Activated CD8-positive, alpha-beta T cell treated with anti-CD3 and anti-CD28 coated beads, Interleukin-2, amount 10 ng/mL, durations not matched to agents 7 days and 5 days (primary cell): ENCODE measurements at regions of chr6 and their contacts with region 1.

Region 1: GRCh38 chr6:31441365-31442267 is 38.2 kb downstream of the MICA start:
- DNase-seq: peak; percentile 88
- ATAC-seq: peak; percentile 98
- H3K4me3 Mint-ChIP-seq: no peak overlapping the region
- H3K27ac Mint-ChIP-seq: no peak overlapping the region
- H3K4me1 Mint-ChIP-seq: peaks cover 6% of the 10 kb centered on the region
- H3K27me3 Mint-ChIP-seq: peaks cover 56% of the 10 kb centered on the region

Region 2: DNA sequence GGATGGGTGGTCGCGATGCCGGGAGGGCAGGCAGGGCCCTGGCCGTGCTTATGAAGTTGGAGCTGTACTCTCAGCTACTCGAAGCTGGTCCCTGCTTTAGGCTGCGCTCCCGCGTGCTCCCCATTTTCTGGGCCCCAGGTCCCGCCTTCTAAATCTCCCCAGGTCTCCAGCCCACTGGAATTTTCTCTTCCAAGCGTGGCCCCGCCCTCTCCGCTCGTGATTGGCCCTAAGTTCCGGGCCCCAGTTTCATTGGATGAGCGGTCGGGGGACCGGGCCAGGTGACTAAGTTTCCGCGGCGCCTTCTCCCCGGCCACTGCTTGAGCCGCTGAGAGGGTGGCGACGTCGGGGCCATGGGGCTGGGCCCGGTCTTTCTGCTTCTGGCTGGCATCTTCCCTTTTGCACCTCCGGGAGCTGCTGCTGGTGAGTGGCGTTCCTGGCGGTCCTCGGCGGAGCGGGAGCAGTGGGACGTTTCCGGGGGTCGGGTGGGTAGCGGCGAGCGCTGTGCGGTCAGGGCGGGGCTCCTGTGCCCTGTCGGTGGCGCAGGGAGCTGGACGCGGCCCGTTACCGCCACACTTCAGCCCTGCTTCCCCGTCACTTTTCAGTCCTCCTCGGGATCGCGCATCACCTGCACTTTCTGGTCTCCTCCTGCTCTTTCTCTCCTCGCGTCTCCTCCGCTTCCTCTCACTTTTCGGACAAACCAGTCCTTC is 38.2 kb before region 1 on chr6 and contains the start of gene MICA:
- CTCF ChIA-PET with region 1: interaction called, 93 read pairs
- POLR2A ChIA-PET with region 1: interaction called, 9 read pairs
- DNase-seq: peak; percentile 77
- ATAC-seq: peak; percentile 65
- H3K4me3 Mint-ChIP-seq: peak within 1 kb of the TSS; percentile 81
- H3K27ac Mint-ChIP-seq: peak within 1 kb of the TSS; percentile 64
- H3K4me1 Mint-ChIP-seq: peaks cover 58% of the 10 kb centered on the region
- H3K27me3 Mint-ChIP-seq: no peaks in the 10 kb centered on the region
- total RNA-seq, gene MICA: 8.7 to 9.0 TPM

Region 3: GRCh38 chr6:31462964-31463870 is 21.6 kb after region 1 on chr6:
- CTCF ChIA-PET with region 1: interaction called, 10 read pairs
- POLR2A ChIA-PET with region 1: no interaction called
- DNase-seq: peak; percentile 90
- ATAC-seq: peak; percentile 89
- H3K4me3 Mint-ChIP-seq: peak overlapping the region; percentile 98
- H3K27ac Mint-ChIP-seq: peak overlapping the region; percentile 90
- H3K4me1 Mint-ChIP-seq: peaks cover 53% of the 10 kb centered on the region
- H3K27me3 Mint-ChIP-seq: peaks cover 6% of the 10 kb centered on the region